Activated CD4-positive, alpha-beta T cell treated with anti-CD3 and anti-CD28 coated beads for 36 hours (primary cell): ENCODE measurements at regions of chr6 and their contacts with region 1.

Region 1: GRCh38 chr6:157323255-157323965 is at the start of gene TMEM242:
- DNase-seq: peak; percentile 93
- ATAC-seq: peak; percentile 91
- H3K4me3 Mint-ChIP-seq: peak within 1 kb of the TSS; percentile 90
- H3K27ac Mint-ChIP-seq: peak within 1 kb of the TSS; percentile 87
- H3K4me1 Mint-ChIP-seq: peaks cover 30% of the 10 kb centered on the region
- H3K27me3 Mint-ChIP-seq: peaks cover 13% of the 10 kb centered on the region
- total RNA-seq, gene TMEM242: 4.7 to 7.7 TPM

Region 2: DNA sequence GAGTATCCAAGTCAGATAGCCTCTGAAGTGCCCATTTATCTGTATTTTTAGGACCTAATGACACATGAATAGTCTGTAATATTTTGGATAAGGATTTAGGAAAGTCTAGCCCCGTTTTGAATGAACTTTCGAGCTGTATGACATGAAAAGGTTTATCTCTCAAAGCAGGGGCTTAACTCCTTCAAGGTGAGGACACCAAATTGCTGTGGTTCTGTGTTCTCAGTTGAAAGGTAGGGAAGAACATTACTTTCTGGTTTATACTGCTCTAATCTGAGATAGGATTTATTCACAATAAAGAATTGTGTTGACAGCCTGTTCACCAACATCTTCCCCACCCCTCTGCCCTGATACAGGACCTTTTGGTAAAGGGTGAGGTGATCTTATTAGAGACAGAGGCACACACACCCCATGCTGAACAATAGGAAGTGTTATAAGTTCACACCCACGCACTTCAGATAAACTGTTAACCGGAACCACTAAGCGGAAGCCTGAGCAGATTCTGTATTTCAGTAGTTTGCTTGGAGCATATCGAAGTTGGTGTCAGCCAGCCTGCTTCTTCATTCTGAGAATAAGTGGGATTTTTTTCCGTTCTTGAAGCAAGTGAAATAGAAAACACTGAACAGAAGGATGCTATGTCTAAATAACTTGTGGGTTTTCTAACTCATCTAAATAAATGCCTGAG is 223.4 kb before region 1 on chr6:
- CTCF ChIA-PET with region 1: no interaction called
- POLR2A ChIA-PET with region 1: no interaction called
- intact Hi-C with region 1: no loop called
- DNase-seq: peak; percentile 72
- ATAC-seq: peak; percentile 98
- H3K4me3 Mint-ChIP-seq: peak overlapping the region; percentile 23
- H3K27ac Mint-ChIP-seq: peak overlapping the region; percentile 83
- H3K4me1 Mint-ChIP-seq: peaks cover 56% of the 10 kb centered on the region
- H3K27me3 Mint-ChIP-seq: no peaks in the 10 kb centered on the region

Region 3: GRCh38 chr6:157304899-157305663 is 18.3 kb before region 1 on chr6:
- CTCF ChIA-PET with region 1: no interaction called
- POLR2A ChIA-PET with region 1: no interaction called
- intact Hi-C with region 1: no loop called
- DNase-seq: no peak
- ATAC-seq: no peak
- H3K4me3 Mint-ChIP-seq: no peak overlapping the region
- H3K27ac Mint-ChIP-seq: no peak overlapping the region
- H3K4me1 Mint-ChIP-seq: peaks cover 4% of the 10 kb centered on the region
- H3K27me3 Mint-ChIP-seq: no peaks in the 10 kb centered on the region

Region 4: DNA sequence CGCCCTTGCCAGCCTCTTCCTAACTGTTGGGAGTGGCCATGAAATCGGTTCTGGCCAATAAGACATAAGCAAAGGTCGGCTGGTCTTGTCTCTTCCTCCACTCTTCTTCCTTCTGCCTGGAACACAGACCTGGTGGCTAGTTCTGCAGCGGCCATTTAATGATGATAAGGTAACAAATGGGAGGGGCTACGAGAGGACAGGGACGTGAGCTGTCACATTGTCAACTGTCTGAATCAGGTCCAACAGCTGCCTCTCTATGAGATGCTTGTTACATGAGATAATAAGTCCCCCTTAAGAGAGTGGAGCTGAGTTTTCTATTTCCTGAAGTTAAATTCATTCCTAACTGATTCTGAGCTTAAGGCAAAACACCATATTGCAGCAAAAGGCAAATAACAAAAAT is 12.4 kb after region 1 on chr6:
- CTCF ChIA-PET with region 1: interaction called, 11 read pairs
- POLR2A ChIA-PET with region 1: no interaction called
- intact Hi-C with region 1: no loop called
- DNase-seq: no peak
- ATAC-seq: no peak
- H3K4me3 Mint-ChIP-seq: no peak overlapping the region
- H3K27ac Mint-ChIP-seq: no peak overlapping the region
- H3K4me1 Mint-ChIP-seq: no peaks in the 10 kb centered on the region
- H3K27me3 Mint-ChIP-seq: peaks cover 28% of the 10 kb centered on the region

Region 5: DNA sequence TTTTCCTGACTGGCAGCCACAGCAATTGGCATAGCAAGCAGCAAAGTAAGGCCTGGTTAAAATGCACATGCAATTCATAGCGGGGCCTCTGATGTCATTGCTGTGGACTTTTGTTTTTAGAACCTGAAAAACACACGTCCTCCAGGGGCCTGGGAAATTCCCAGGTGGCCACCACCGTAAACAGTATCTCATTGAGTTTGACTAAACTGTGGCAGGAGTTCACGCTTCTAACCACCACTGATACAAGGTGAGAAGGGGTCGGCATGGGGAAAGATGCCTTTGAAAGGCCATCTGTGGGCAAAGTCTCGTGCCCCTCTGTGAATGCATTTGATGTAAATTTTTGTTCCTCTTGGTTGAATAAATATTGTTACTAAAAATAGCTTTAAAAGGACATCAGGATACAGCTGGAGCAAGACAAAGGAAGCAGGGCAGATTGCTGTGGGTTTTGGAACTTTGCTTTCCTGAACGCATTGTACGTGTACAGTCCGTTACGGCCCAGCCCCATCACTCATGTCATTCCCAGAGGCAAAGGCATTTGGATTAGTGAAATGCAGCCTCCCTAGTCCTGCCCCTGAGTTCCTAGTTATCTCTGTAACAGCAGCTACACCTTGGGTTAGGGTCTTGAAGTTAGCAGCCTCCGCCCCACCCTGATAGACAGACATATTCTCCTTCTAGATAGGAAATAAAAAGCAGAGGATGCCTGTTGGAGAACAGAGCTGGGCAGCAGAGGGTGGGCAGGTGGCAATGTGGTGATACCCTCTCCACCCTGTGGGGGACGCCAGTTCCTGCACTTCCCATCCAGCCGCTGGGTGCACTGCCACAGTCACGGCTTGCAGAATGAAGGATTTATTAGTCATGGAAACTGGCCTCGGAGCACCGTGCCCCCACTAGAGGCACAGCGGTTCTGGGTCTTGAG is 137.8 kb after region 1 on chr6:
- CTCF ChIA-PET with region 1: interaction called, 4 read pairs
- POLR2A ChIA-PET with region 1: no interaction called
- intact Hi-C with region 1: loop called (anchors 2 to 10 kb)
- DNase-seq: peak; percentile 90
- ATAC-seq: peak; percentile 77
- H3K4me3 Mint-ChIP-seq: no peak overlapping the region
- H3K27ac Mint-ChIP-seq: peak overlapping the region; percentile 89
- H3K4me1 Mint-ChIP-seq: peaks cover 56% of the 10 kb centered on the region
- H3K27me3 Mint-ChIP-seq: no peaks in the 10 kb centered on the region

Region 6: GRCh38 chr6:157535339-157536222 is 212.2 kb after region 1 on chr6:
- CTCF ChIA-PET with region 1: no interaction called
- POLR2A ChIA-PET with region 1: no interaction called
- intact Hi-C with region 1: loop called in 1 of 2 experiments (anchors 2 kb)
- DNase-seq: peak; percentile 49
- ATAC-seq: peak; percentile 88
- H3K4me3 Mint-ChIP-seq: peak overlapping the region; percentile 47
- H3K27ac Mint-ChIP-seq: peak overlapping the region; percentile 88
- H3K4me1 Mint-ChIP-seq: peaks cover 35% of the 10 kb centered on the region
- H3K27me3 Mint-ChIP-seq: peaks cover 9% of the 10 kb centered on the region

Region 7: DNA sequence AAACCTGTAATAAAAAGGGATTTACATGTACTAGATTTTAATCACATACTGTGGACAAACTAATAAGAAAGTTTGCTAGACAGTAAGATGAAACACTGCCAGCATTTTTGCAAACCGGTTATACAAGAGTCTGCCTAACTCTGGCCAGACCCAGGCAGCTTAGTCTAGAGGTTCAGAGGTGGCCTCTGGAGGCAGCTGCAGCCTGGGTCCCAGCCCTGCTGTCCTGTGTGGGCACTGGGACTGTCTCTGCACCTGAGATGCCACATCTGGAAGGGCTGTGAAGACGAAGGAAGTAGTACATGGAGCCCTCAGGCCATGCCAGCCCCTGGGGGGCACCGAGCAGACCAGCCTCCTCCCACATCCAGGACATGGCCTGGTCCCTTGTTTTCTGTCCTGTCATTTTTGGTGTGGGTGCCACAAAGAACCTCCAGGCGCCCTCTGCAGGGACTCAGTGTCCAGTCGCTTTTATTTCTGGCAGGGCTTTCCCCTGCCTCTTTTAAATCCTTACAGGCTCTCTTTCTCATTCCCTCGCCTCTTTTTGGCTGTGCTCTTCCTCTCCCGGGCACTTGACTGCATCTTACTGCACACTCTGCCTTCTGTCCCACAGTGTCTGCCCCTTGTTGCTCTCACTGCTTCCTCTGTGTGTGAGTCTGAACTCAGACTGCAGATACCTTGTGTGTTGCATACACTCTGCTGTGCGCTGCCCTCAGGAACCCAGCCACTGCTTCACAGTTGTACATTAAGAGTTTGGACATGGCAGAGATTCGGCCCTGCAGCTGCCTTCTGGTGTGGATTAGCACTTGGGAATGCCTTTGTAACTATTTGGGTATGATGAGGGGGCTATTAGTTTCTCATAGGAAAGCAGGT is 274.3 kb after region 1 on chr6:
- CTCF ChIA-PET with region 1: interaction called, 3 read pairs
- POLR2A ChIA-PET with region 1: no interaction called
- intact Hi-C with region 1: loop called in 1 of 2 experiments (anchors 2 kb)
- DNase-seq: peak; percentile 66
- ATAC-seq: peak; percentile 44
- H3K4me3 Mint-ChIP-seq: no peak overlapping the region
- H3K27ac Mint-ChIP-seq: no peak overlapping the region
- H3K4me1 Mint-ChIP-seq: no peaks in the 10 kb centered on the region
- H3K27me3 Mint-ChIP-seq: no peaks in the 10 kb centered on the region

Region 8: GRCh38 chr6:157667211-157668008 is 344.0 kb after region 1 on chr6:
- CTCF ChIA-PET with region 1: interaction called, 24 read pairs
- POLR2A ChIA-PET with region 1: no interaction called
- intact Hi-C with region 1: loop called in 1 of 2 experiments (anchors 2 kb)
- DNase-seq: peak; percentile 73
- ATAC-seq: peak; percentile 48
- H3K4me3 Mint-ChIP-seq: no peak overlapping the region
- H3K27ac Mint-ChIP-seq: no peak overlapping the region
- H3K4me1 Mint-ChIP-seq: peaks cover 31% of the 10 kb centered on the region
- H3K27me3 Mint-ChIP-seq: peaks cover 5% of the 10 kb centered on the region